ENCODE measurements at regions of chr2 and their contacts with region 1.

Region 1: GRCh38 chr2:69804416-69804815 is 25.0 kb upstream of the GMCL1 start:
- DNase-seq: no peak
- H3K4me3 ChIP-seq: no peak overlapping the region
- H3K27ac ChIP-seq: no peak overlapping the region
- H3K4me1 ChIP-seq: peaks cover 27% of the 10 kb centered on the region
- CTCF ChIP-seq: no peak

Region 2: GRCh38 chr2:69789175-69789721 is 15.2 kb before region 1 on chr2:
- CTCF ChIA-PET with region 1: interaction called, 3 read pairs
- POLR2A ChIA-PET with region 1: interaction called, 11 read pairs
- intact Hi-C with region 1: no loop called
- DNase-seq: peak; percentile 11
- H3K4me3 ChIP-seq: peak overlapping the region; percentile 61
- H3K27ac ChIP-seq: peak overlapping the region; percentile 49
- H3K4me1 ChIP-seq: peaks cover 36% of the 10 kb centered on the region
- CTCF ChIP-seq: no peak

Measured in OCI-LY7 (cell line).